HCT116 (cell line): ENCODE measurements at regions of chr3 and their contacts with region 1.

Region 1: GRCh38 chr3:27467545-27467944 is 16.6 kb downstream of the SLC4A7 start:
- DNase-seq: no peak
- ATAC-seq: peak; percentile 82
- H3K4me3 ChIP-seq: no peak overlapping the region
- H3K27ac ChIP-seq: no peak overlapping the region
- H3K4me1 ChIP-seq: peaks cover 3 to 23% of the 10 kb centered on the region in 2 experiments; a peak in 3 of 4 replicates
- H3K27me3 ChIP-seq: no peaks in the 10 kb centered on the region
- CTCF ChIP-seq: peak; percentile 38 to 70 (median 56); a peak in 3 of 6 replicates
- POLR2A ChIP-seq: no peak
- RAD21 ChIP-seq: peak; percentile 63

Region 2: GRCh38 chr3:27357665-27358258 is 109.8 kb before region 1 on chr3:
- CTCF ChIA-PET with region 1: interaction called, 6 read pairs
- POLR2A ChIA-PET with region 1: no interaction called
- RAD21 ChIA-PET with region 1: no interaction called
- intact Hi-C with region 1: loop called (anchors 1 kb)
- DNase-seq: peak; percentile 59
- ATAC-seq: peak; percentile 99
- H3K4me3 ChIP-seq: no peak overlapping the region
- H3K27ac ChIP-seq: no peak overlapping the region
- H3K4me1 ChIP-seq: peaks cover 7 to 9% of the 10 kb centered on the region in 2 experiments; a peak in 3 of 4 replicates
- H3K27me3 ChIP-seq: no peaks in the 10 kb centered on the region
- CTCF ChIP-seq: peak; percentile 73 to 81 (median 78)
- POLR2A ChIP-seq: no peak
- RAD21 ChIP-seq: peak; percentile 71